Transverse colon (tissue), 4 donors: ENCODE measurements at regions of chr9 and their contacts with region 1.

Region 1: DNA sequence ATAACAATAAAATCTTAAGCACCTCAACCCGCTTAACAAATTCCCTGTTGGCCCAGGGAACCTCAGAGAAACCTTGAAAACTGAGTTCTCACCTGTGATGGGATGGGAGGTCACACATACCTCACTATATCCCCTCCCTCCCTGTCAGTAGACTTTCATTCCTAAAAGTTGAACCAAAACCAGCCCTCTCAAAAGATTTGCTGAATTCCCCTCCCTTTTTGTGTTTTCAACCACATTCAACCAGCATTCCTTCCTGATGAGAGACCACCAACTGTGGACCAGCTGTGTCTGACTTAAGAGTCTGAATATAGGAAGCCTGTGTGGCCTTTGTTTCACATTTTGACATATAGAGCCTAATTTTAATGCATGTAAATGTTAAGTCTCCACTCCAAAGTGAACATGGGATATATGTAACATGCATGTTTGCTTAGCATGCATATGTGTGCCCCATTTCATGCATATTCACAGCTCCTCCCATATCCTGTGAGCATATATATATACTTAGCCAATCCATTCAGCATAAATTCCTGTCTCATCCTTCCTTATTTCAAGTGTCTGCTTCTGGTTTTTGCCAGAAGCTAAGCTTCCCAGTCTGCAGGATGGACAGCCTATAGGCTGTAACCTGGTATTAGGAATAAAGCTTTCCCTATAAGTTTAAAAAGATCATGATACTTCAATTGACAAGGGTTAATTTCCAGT is 604.6 kb downstream of the PTPRD start:
- DNase-seq: no peak
- H3K4me3 ChIP-seq: no peak overlapping the region
- H3K27ac ChIP-seq: no peak overlapping the region
- H3K4me1 ChIP-seq: no peaks in the 10 kb centered on the region
- H3K27me3 ChIP-seq: no peaks in the 10 kb centered on the region
- CTCF ChIP-seq: no peak
- EP300 ChIP-seq: no peak
- POLR2A ChIP-seq: no peak

Region 2: DNA sequence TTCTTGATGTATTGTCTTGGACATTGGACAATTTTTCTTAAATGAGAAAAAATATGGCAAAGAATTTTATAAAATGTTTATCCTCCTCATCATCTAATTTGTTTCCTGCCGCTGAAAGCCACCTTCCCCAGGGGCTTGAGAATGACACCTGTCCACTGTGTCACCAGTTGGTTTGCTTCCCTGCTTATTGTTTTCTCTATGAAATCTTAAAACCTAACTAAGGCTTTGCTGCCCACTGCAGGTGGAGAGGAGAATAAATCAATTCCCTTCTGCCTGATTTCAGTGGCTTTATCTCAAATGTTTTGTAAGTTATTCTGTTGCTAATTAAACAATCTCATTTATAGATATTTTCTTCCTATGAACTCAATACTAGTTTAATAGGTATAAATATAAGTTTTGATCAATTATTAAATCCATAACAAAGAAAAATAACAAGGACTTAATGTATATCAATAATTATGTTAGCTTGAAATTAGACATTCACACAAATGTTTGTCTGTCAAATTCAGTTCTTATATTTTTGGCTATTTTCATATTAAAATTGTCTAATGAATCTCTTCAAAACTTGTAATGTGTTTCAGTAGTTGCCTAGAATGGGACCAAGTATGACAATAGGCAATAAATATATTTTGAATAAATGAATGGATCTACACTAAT is 217.9 kb before region 1 on chr9:
- in situ Hi-C with region 1: no loop called
- intact Hi-C with region 1: no loop called
- DNase-seq: peak; percentile 15
- H3K4me3 ChIP-seq: no peak overlapping the region
- H3K27ac ChIP-seq: no peak overlapping the region
- H3K4me1 ChIP-seq: no peaks in the 10 kb centered on the region
- H3K27me3 ChIP-seq: no peaks in the 10 kb centered on the region
- CTCF ChIP-seq: peak; percentile 44 to 60 (median 52)
- EP300 ChIP-seq: no peak
- POLR2A ChIP-seq: no peak

Region 3: GRCh38 chr9:9912459-9912858 is 95.8 kb before region 1 on chr9:
- in situ Hi-C with region 1: loop called in 1 of 4 experiments (anchors 25 kb)
- intact Hi-C with region 1: no loop called
- DNase-seq: no peak
- H3K4me3 ChIP-seq: no peak overlapping the region
- H3K27ac ChIP-seq: no peak overlapping the region
- H3K4me1 ChIP-seq: no peaks in the 10 kb centered on the region
- H3K27me3 ChIP-seq: no peaks in the 10 kb centered on the region
- CTCF ChIP-seq: no peak
- EP300 ChIP-seq: no peak
- POLR2A ChIP-seq: no peak

Region 4: DNA sequence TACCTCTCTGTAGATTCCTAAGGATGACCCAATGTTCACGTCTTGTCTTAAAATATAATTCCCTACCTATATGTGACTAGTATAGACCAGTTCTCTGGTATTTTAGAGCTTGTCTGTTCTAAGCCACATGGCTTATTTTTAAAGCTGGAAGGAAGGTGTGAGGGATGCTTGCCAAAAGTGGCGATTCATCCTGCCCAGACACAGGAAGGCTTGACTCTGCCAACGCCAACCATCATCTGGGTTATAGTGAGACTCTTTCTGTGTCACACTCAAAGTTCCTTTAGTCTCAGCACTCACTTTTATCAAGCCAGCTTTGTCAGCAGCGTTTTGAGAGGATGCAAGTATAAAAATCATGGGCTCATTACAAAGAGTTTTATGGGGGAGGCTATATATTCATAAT is 104.5 kb after region 1 on chr9:
- in situ Hi-C with region 1: loop called in 1 of 4 experiments (anchors 25 kb)
- intact Hi-C with region 1: no loop called
- DNase-seq: no peak
- H3K4me3 ChIP-seq: no peak overlapping the region
- H3K27ac ChIP-seq: no peak overlapping the region
- H3K4me1 ChIP-seq: no peaks in the 10 kb centered on the region
- H3K27me3 ChIP-seq: no peaks in the 10 kb centered on the region
- CTCF ChIP-seq: no peak
- EP300 ChIP-seq: no peak
- POLR2A ChIP-seq: no peak